Left ventricle myocardium inferior (tissue), 1 donor: ENCODE measurements at regions of chr11 and their contacts with region 1.

Region 1: GRCh38 chr11:73965076-73965860 is 14.4 kb downstream of the DNAJB13 start:
- DNase-seq: no peak
- H3K4me3 ChIP-seq: no peak overlapping the region
- H3K27ac ChIP-seq: no peak overlapping the region
- H3K4me1 ChIP-seq: peaks cover 6% of the 10 kb centered on the region
- H3K27me3 ChIP-seq: no peaks in the 10 kb centered on the region
- CTCF ChIP-seq: no peak

Region 2: DNA sequence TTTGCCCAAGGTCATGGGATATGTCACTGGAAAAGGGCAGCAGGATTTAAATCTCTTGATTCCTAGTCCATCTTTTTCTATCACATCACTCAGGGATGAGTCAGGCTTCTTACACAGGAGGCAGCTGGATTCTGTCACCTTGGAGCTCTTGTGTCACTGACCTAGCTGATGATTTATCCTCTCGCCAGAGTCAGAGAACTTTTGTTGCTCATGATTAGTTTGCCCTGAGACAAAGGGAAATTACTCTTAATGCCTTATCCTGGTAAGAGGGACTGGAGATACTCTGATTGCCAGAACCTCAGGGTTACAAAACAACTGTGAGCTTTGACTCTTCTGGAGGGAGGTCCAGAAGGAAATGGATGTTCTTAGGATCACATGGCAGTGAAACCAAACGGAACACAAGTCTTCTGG is 98.7 kb before region 1 on chr11:
- intact Hi-C with region 1: no loop called
- DNase-seq: no peak
- H3K4me3 ChIP-seq: no peak overlapping the region
- H3K27ac ChIP-seq: peak overlapping the region; percentile 56
- H3K4me1 ChIP-seq: peaks cover 16% of the 10 kb centered on the region
- H3K27me3 ChIP-seq: no peaks in the 10 kb centered on the region
- CTCF ChIP-seq: no peak

Region 3: GRCh38 chr11:74057249-74058151 is 92.2 kb after region 1 on chr11:
- intact Hi-C with region 1: no loop called
- DNase-seq: no peak
- H3K4me3 ChIP-seq: no peak overlapping the region
- H3K27ac ChIP-seq: no peak overlapping the region
- H3K4me1 ChIP-seq: no peaks in the 10 kb centered on the region
- H3K27me3 ChIP-seq: no peaks in the 10 kb centered on the region
- CTCF ChIP-seq: no peak

Region 4: DNA sequence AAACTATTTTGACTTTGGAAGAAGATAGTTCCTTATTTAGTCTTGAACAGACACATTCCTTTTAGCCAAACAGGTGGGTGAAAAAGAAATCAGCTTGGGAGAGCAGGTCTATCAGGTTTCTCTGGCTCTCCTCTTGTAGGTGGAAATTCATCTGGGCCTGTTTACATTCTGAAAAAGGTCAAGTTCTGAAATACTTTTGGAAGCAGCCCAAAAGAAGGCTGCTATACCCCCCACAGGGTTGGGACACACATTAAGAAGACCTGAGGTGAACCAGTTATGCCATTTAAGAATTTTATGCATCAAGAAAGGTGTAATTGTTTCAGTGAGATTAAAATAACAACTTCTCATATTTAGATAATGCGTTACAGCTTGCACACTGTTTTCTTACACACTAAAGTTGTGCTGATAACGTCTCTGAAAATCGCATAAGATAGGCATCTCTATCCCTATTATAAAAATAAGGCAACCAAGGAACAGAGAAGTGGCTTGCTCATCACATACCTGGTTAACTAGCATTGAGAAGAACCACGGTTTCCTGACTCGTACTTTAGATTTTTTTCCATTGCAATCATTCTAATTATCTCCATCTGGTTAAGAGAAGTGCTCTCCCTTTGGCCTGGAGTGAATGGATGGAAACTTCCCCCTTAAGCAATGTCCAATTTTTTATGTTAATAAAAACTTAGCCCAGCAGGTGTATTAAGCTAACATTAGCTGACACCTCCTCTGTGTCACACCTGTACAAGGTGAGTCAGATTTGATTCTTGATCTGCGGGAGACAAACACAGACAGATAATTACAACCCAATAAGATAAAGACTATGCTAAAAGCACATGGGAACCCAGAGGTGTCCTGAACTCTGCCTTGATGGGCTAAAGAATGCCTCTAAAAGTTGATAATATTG is 104.1 kb after region 1 on chr11:
- intact Hi-C with region 1: loop called (anchors 10 kb)
- DNase-seq: no peak
- H3K4me3 ChIP-seq: no peak overlapping the region
- H3K27ac ChIP-seq: no peak overlapping the region
- H3K4me1 ChIP-seq: peaks cover 3% of the 10 kb centered on the region
- H3K27me3 ChIP-seq: no peaks in the 10 kb centered on the region
- CTCF ChIP-seq: no peak